PC-3 (cell line): ENCODE measurements at regions of chr3 and their contacts with region 1.

Region 1: DNA sequence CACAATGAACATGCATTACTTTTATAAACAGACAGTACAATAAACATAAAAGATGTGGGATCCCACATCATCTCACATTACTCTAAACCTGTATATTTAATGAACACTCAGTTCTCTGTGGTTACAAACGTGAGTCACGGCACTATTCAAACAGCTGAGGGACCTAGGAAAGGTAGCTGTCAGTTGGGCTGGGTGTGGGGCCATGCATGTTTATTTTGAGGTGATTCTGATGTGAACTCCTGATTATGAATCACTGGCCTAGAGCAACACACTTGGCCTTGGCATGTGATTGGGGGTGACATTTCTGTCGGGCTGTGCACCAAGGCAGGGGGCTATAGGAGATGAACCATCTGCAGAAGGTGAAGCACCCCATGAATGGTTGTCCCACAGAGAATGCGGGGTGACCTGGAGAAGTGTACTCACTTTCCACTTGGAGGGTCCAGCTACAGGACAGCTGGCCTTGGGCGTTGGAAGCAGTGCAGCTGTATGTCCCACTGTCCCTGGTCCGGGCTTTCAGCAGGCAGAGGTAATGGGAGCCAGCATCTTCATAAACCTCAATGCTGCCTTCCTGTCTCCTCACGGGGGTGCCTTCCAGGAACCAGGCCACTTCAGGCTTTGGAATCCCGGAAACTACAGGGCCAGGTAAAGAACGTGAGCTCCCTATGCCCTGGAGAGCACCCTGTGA is 147.8 kb upstream of the HACD2 start:
- DNase-seq: peak; percentile 99
- ATAC-seq: peak; percentile 91
- H3K4me3 ChIP-seq: no peak overlapping the region
- H3K27ac ChIP-seq: peak overlapping the region; percentile 92
- H3K4me1 ChIP-seq: peaks cover 47% of the 10 kb centered on the region
- H3K27me3 ChIP-seq: no peaks in the 10 kb centered on the region
- CTCF ChIP-seq: no peak

Region 2: DNA sequence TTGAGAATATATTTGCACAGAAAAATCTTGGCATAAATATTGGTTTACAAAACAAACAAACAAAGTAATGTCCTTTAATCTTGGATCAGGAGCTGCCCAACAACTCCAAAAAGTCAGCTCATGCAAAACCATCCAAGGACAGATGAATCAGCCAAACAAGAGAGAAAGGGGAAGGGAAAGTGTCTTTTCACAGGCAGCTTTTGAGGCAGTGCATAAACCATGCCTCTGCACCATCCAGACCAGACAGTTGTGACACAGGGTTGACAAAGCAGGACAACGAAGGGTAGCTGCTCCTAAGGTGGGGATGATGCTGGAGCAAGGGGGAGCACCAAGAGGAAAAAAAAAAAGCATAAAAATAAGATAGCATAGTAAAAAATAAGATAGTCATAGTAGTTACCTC is 1668.7 kb before region 1 on chr3:
- CTCF ChIA-PET with region 1: no interaction called
- POLR2A ChIA-PET with region 1: no interaction called
- intact Hi-C with region 1: no loop called
- DNase-seq: no peak
- ATAC-seq: no peak
- H3K4me3 ChIP-seq: no peak overlapping the region
- H3K27ac ChIP-seq: no peak overlapping the region
- H3K4me1 ChIP-seq: no peaks in the 10 kb centered on the region
- H3K27me3 ChIP-seq: no peaks in the 10 kb centered on the region
- CTCF ChIP-seq: no peak

Region 3: DNA sequence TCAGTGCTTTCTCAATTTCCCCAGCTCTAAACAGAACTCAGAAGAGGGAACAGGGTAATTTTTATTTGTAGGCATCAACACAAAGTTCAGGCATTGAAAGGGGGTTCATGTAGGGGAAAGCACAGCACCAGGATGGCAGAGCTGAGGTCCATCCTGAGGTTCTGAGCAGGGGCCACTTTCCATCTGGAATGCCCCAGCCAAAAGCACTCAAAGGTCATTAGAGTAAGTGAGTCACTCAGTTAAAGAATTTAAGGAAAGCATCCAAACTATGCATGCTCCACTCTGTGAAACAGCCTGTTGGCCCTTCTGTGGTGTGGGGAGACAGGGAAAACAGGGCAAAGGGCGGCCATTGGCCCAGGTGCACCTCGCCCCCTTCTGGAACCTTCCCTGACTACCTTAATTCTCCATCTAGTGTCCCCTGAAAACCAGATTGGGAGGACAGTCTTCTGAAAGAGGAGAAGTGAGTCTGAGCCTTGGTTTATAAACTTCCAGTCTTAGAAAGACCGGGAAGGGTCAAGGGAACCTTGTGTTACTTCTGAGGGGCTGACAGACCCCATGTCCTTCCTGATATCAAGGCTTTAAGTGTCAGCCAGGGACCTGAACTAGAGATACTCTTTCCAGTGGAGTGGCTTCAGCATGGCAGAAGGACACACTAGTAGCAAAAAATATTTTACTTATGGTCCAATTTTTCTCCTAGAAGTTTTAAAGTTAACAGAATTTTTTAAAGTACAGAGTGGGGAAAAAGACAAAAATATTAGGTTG is 18.2 kb after region 1 on chr3:
- CTCF ChIA-PET with region 1: no interaction called
- POLR2A ChIA-PET with region 1: no interaction called
- intact Hi-C with region 1: loop called (anchors 2 kb)
- DNase-seq: peak; percentile 95
- ATAC-seq: peak; percentile 94
- H3K4me3 ChIP-seq: no peak overlapping the region
- H3K27ac ChIP-seq: 0 out of 2 replicates have a peak overlapping the region, but pooled peaks have one; percentile 9
- H3K4me1 ChIP-seq: peaks cover 23% of the 10 kb centered on the region
- H3K27me3 ChIP-seq: no peaks in the 10 kb centered on the region
- CTCF ChIP-seq: no peak; the same call in 1 of the 2 replicates

Region 4: DNA sequence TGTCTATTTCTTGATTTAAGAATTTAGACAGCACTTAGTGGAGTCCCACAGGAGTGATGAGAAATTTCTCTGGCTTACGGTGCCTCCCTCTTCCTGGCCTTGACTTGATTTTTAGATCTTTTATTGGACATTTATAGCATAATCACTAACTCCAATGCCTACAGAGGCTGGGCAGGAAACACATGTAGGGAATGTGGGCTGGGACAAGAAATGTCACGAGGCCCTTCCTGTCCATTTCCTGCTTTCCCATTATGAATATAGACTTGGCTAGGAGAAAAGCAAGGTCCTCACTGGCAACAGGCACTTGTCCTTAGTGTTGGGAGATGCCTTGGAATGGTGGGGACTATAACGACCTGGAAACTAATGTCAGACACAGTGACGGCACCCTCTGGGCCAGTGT is 51.2 kb after region 1 on chr3:
- CTCF ChIA-PET with region 1: no interaction called
- POLR2A ChIA-PET with region 1: no interaction called
- intact Hi-C with region 1: loop called (anchors 5 kb)
- DNase-seq: no peak
- ATAC-seq: peak; percentile 34
- H3K4me3 ChIP-seq: no peak overlapping the region
- H3K27ac ChIP-seq: no peak overlapping the region
- H3K4me1 ChIP-seq: peaks cover 20% of the 10 kb centered on the region
- H3K27me3 ChIP-seq: no peaks in the 10 kb centered on the region
- CTCF ChIP-seq: no peak

Region 5: DNA sequence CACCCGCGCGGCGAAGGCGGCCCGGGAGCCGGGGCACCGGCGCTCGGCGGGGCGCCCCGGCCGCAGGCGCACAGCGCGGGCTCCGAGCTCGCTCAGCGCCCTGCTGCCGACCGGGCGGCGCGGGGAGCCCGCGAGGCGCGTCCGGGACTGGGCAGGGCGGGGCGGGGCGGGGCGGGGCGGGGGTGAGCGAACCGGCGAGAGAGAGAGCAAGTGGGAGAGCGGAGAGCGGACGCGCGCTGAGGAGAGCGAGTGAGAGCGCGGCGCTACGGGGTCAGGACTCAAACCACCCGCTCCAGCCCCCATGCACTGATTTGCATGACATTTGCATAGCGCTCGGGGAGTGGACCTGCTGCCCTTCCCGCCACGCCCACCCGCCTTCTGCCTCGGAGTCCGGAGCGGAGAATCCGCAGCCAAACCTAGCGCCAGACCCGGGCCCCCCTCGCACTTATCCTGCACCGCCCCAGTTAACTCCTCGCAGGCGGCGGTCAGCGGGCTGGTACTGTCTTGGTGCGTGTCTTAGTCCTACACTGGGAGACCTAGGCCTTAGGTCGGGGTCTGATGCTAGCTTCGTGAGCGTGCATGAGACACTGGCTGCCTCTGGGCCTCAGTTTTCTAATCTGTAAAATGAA is 151.7 kb after region 1 on chr3 and contains the start of gene MYLK:
- CTCF ChIA-PET with region 1: no interaction called
- POLR2A ChIA-PET with region 1: no interaction called
- intact Hi-C with region 1: loop called (anchors 5 kb)
- DNase-seq: peak; percentile 85
- ATAC-seq: peak; percentile 92
- H3K4me3 ChIP-seq: peak within 1 kb of the TSS; percentile 81
- H3K27ac ChIP-seq: no peak within 1 kb of the TSS
- H3K4me1 ChIP-seq: peaks cover 8% of the 10 kb centered on the region
- H3K27me3 ChIP-seq: no peaks in the 10 kb centered on the region
- CTCF ChIP-seq: no peak
- total RNA-seq, gene MYLK: 6.9 and 8.7 TPM in 2 replicates

Region 6: DNA sequence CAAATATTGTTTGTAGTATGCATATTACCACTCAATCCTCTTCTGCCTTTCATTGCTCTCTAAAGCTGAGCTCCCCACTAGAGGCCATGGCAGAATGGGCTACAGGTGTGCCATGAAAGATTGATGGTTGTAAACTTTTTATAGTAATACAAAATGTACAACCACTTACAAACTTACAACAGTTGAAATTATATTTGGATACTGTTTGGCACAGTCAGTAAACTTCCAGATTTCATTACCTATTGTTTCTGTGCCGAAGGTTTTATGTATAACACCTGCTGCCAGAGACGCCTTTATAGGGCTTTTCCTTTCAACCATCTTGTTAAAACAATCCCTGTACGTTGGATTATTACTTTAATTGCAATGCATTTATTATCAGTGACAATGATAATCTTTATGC is 252.3 kb after region 1 on chr3:
- CTCF ChIA-PET with region 1: no interaction called
- POLR2A ChIA-PET with region 1: no interaction called
- intact Hi-C with region 1: loop called (anchors 5 kb)
- DNase-seq: no peak
- ATAC-seq: no peak
- H3K4me3 ChIP-seq: no peak overlapping the region
- H3K27ac ChIP-seq: no peak overlapping the region
- H3K4me1 ChIP-seq: 0 out of 2 replicates have a peak, but pooled peaks cover 4% of the 10 kb centered on the region
- H3K27me3 ChIP-seq: peaks cover 77% of the 10 kb centered on the region
- CTCF ChIP-seq: no peak

Region 7: DNA sequence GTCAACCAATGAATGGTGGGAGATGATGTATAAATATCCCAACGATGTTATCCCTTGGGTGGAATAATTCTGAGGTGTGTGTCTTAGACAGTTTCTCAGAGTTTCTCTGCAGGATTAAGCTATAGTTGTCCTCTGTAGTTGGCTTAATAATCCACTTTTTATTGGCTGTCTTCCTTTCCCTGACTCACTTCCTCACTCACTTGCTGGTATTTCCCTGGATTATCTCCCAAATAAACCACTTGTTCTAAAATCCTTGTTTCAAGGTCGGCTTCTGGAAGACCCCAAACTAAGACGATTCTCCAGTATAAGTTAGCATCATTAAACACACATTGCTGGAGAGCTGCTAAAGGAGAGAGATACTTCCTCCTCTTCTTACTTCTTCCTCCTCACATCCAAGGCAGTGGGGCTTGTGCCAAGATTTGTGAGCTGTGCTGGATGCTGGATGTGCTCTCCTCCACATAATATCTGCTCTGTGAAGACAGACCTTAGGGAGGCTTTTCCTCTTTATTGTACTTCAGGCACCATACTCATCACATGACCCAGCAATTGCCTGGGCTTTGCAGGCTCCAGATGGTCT is 281.8 kb after region 1 on chr3:
- CTCF ChIA-PET with region 1: no interaction called
- POLR2A ChIA-PET with region 1: no interaction called
- intact Hi-C with region 1: no loop called
- DNase-seq: peak; percentile 16
- ATAC-seq: peak; percentile 31; the same call in 1 of the 2 replicates
- H3K4me3 ChIP-seq: no peak overlapping the region
- H3K27ac ChIP-seq: no peak overlapping the region
- H3K4me1 ChIP-seq: no peaks in the 10 kb centered on the region
- H3K27me3 ChIP-seq: peaks cover 20% of the 10 kb centered on the region
- CTCF ChIP-seq: no peak